ENCODE measurements at regions of chr17 and their contacts with region 1.

Region 1: GRCh38 chr17:12667299-12667958 is 1.7 kb downstream of the MYOCD start:
- DNase-seq: no peak
- H3K4me3 ChIP-seq: no peak overlapping the region
- H3K27ac ChIP-seq: peak overlapping the region; percentile 38 to 56
- H3K4me1 ChIP-seq: no peaks in the 10 kb centered on the region
- H3K27me3 ChIP-seq: peaks cover 3% of the 10 kb centered on the region
- CTCF ChIP-seq: peak in 3 of 4 experiments; percentile 47 to 57 (median 56)
- POLR2A ChIP-seq: no peak

Region 2: DNA sequence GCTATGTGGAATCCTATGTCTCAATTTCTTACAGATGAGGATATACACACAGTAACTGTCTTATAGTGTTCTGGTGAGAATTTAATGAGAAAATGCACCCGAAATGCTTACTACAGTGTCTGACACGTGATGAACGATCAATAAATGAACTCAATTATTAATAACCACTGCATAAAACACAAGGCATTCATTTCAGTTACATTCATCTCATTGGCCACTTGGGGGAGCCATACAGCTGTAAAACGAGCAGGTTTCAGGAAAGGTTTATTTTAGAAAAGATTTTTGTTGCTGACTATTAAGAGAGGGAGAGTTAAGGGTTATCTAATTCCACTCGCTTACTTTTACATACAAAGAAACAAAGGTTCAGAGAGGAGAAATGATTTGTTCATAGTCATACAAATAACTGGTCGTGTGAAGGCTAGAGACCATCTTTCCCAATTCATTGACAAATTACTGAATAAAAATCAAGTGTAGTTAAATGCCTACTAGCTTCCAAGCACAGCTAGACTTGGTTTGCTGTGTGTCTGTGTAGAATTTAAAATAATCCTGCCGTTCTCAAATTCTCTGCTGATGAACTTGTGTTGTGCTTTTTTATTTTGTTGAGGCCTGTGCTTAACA is 486.7 kb before region 1 on chr17:
- intact Hi-C with region 1: loop called (anchors 2 kb)
- DNase-seq: peak; percentile 30
- H3K4me3 ChIP-seq: no peak overlapping the region
- H3K27ac ChIP-seq: no peak overlapping the region
- H3K4me1 ChIP-seq: no peaks in the 10 kb centered on the region
- H3K27me3 ChIP-seq: no peaks in the 10 kb centered on the region
- CTCF ChIP-seq: peak; percentile 31 to 72 (median 68)
- POLR2A ChIP-seq: no peak

Region 3: GRCh38 chr17:12545877-12546513 is 121.4 kb before region 1 on chr17:
- intact Hi-C with region 1: loop called (anchors 2 kb)
- DNase-seq: no peak
- H3K4me3 ChIP-seq: no peak overlapping the region
- H3K27ac ChIP-seq: no peak overlapping the region
- H3K4me1 ChIP-seq: no peaks in the 10 kb centered on the region
- H3K27me3 ChIP-seq: no peaks in the 10 kb centered on the region
- CTCF ChIP-seq: peak in 3 of 4 experiments; percentile 36 to 60 (median 50)
- POLR2A ChIP-seq: no peak

Region 4: DNA sequence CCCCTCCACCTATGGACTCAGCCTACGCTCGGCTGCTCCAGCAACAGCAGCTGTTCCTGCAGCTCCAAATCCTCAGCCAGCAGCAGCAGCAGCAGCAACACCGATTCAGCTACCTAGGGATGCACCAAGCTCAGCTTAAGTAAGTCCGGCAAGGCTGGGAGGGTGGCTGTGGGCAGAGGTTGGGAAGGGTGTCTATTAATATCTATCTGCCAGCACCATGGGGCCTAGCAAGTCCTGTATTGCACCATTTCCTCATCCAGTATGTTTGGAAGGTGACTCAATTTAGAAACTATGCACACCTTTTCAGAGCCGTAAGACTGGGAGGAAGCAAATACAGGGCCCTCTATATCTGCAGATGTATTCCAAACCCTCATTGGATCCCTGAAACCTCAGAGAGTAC is 76.9 kb after region 1 on chr17:
- intact Hi-C with region 1: loop called (anchors 5 kb)
- DNase-seq: no peak
- H3K4me3 ChIP-seq: no peak overlapping the region
- H3K27ac ChIP-seq: no peak overlapping the region
- H3K4me1 ChIP-seq: no peaks in the 10 kb centered on the region
- H3K27me3 ChIP-seq: no peaks in the 10 kb centered on the region
- CTCF ChIP-seq: no peak
- POLR2A ChIP-seq: no peak

Region 5: GRCh38 chr17:13002766-13003451 is 335.5 kb after region 1 on chr17:
- intact Hi-C with region 1: loop called (anchors 10 kb)
- DNase-seq: peak; percentile 68
- H3K4me3 ChIP-seq: no peak overlapping the region
- H3K27ac ChIP-seq: no peak overlapping the region
- H3K4me1 ChIP-seq: peaks cover 7% of the 10 kb centered on the region
- H3K27me3 ChIP-seq: no peaks in the 10 kb centered on the region
- CTCF ChIP-seq: peak; percentile 79 to 90 (median 81)
- POLR2A ChIP-seq: no peak

Measured in prostate gland (tissue), 2 donors.